HEK293T (cell line): ENCODE measurements at regions of chr10 and their contacts with region 1.

Region 1: DNA sequence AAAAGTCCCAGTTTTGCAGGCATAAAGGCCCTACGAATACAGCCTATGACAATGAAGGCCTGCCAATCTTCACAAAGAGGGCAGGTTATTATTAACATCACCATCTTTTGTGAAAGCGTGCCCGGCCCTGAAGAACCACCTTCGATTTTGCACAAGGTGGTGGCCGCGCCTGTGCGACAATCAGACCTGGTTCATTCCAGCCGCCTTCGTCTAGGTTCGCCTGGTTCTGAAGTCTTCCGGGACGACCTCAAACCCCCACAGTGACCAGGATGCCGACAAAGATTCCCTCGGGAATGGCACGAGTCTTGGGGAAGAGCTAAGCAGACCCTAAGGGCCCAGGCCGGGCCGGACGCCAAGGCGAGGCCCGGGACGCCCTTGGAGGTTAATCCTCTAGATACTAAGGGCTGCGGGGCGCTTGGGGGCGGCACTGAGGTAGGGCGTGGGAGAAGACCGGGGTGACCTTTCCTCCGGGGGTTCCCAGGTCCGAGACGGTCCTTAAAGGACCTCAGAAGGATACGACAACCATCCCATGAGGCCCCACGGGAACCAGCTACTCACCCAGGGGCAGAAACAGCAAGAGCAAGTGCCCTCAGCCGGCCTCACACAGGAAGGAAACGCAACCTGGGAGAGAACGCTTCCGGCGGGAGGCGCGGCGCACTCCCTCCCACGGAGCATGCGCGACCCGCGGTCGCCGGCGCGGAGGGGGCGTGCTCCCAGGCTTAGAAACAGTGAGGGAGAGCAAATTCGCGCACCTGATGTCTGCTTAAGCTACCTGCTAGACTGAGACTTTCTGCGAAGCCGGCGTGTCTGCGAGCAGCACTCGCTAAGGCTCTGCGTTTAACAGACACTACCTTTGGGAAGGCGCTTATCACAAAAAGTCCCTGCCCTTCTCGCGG is at the start of gene ATAD1:
- DNase-seq: peak; percentile 91

Region 2: GRCh38 chr10:87740232-87740631 is 77.6 kb before region 1 on chr10:
- CTCF ChIA-PET with region 1: no interaction called
- POLR2A ChIA-PET with region 1: no interaction called
- DNase-seq: no peak

Region 3: DNA sequence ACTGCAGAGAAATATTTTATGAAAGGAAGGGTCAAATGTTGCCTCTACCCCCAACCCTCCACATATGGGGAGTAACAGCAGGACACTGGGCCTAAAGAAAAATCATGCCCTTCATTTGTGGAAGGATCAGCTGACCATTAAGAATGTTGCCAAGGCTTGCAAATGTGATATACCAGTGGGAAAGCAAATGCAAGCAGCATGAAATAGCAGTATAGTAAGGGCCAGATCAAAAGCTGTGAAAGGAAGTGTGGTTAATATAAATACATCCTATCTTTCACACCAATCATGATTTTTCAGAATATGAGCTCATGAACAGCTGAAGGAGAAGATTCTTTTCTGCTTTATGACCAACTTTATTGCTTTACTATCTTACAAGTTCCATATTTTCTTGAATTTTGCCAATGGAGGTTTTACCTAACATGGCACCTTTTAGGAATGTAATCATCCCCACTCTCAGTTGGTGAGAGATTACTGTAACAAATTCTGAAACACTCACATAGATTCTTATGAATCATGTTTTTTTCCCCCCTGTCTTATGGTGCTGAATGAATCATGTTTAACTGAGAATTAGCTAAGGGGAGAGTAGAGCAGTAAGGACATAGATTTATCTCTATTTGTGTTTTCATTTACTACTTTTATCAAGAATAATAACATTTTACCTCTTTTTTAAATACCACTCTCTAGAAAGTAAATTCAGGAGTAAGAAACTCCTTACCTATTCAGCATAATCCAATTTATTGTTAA is 12.3 kb after region 1 on chr10:
- CTCF ChIA-PET with region 1: no interaction called
- POLR2A ChIA-PET with region 1: interaction called, 25 read pairs
- DNase-seq: no peak

Region 4: GRCh38 chr10:88091490-88092105 is 273.7 kb after region 1 on chr10:
- CTCF ChIA-PET with region 1: no interaction called
- POLR2A ChIA-PET with region 1: no interaction called
- DNase-seq: no peak